ENCODE measurements at regions of chr9 and their contacts with region 1.

Region 1: GRCh38 chr9:12566404-12567090 is 126.6 kb upstream of the TYRP1 start:
- DNase-seq: no peak
- H3K4me3 ChIP-seq: no peak overlapping the region
- H3K27ac ChIP-seq: no peak overlapping the region
- H3K4me1 ChIP-seq: no peaks in the 10 kb centered on the region
- H3K27me3 ChIP-seq: no peaks in the 10 kb centered on the region
- CTCF ChIP-seq: no peak
- EP300 ChIP-seq: no peak
- POLR2A ChIP-seq: no peak
- RAD21 ChIP-seq: no peak

Region 2: GRCh38 chr9:12464910-12465512 is 101.5 kb before region 1 on chr9:
- CTCF ChIA-PET with region 1: no interaction called
- POLR2A ChIA-PET with region 1: no interaction called
- DNase-seq: no peak
- H3K4me3 ChIP-seq: no peak overlapping the region
- H3K27ac ChIP-seq: no peak overlapping the region
- H3K4me1 ChIP-seq: peaks cover 0 to 8% (median 1%) of the 10 kb centered on the region in 4 experiments; a peak in 2 of 7 replicates
- H3K27me3 ChIP-seq: no peaks in the 10 kb centered on the region
- CTCF ChIP-seq: peak in 2 of 3 experiments; percentile 37 to 43; a peak in 2 of 4 replicates
- EP300 ChIP-seq: no peak
- POLR2A ChIP-seq: no peak
- RAD21 ChIP-seq: peak; percentile 72 to 85

Region 3: GRCh38 chr9:12554636-12555035 is 11.9 kb before region 1 on chr9:
- CTCF ChIA-PET with region 1: interaction called, 12 read pairs
- POLR2A ChIA-PET with region 1: no interaction called
- DNase-seq: no peak
- H3K4me3 ChIP-seq: no peak overlapping the region
- H3K27ac ChIP-seq: no peak overlapping the region
- H3K4me1 ChIP-seq: peaks cover 0 to under 1% (median 0%) of the 10 kb centered on the region in 4 experiments; a peak in 1 of 7 replicates
- H3K27me3 ChIP-seq: no peaks in the 10 kb centered on the region
- CTCF ChIP-seq: peak in 2 of 3 experiments; percentile 23 to 38; a peak in 2 of 4 replicates
- EP300 ChIP-seq: no peak
- POLR2A ChIP-seq: no peak
- RAD21 ChIP-seq: peak; percentile 46 to 53